ENCODE measurements at regions of chr16 and their contacts with region 1.

Region 1: GRCh38 chr16:527006-527753 is at the start of gene CAPN15:
- DNase-seq: peak; percentile 91
- ATAC-seq: peak; percentile 71
- H3K4me3 Mint-ChIP-seq: peak within 1 kb of the TSS; percentile 94
- H3K27ac Mint-ChIP-seq: peak within 1 kb of the TSS; percentile 96
- H3K4me1 Mint-ChIP-seq: peaks cover 35% of the 10 kb centered on the region
- H3K27me3 Mint-ChIP-seq: no peaks in the 10 kb centered on the region
- total RNA-seq, gene CAPN15: 64.7 to 69.7 TPM

Region 2: DNA sequence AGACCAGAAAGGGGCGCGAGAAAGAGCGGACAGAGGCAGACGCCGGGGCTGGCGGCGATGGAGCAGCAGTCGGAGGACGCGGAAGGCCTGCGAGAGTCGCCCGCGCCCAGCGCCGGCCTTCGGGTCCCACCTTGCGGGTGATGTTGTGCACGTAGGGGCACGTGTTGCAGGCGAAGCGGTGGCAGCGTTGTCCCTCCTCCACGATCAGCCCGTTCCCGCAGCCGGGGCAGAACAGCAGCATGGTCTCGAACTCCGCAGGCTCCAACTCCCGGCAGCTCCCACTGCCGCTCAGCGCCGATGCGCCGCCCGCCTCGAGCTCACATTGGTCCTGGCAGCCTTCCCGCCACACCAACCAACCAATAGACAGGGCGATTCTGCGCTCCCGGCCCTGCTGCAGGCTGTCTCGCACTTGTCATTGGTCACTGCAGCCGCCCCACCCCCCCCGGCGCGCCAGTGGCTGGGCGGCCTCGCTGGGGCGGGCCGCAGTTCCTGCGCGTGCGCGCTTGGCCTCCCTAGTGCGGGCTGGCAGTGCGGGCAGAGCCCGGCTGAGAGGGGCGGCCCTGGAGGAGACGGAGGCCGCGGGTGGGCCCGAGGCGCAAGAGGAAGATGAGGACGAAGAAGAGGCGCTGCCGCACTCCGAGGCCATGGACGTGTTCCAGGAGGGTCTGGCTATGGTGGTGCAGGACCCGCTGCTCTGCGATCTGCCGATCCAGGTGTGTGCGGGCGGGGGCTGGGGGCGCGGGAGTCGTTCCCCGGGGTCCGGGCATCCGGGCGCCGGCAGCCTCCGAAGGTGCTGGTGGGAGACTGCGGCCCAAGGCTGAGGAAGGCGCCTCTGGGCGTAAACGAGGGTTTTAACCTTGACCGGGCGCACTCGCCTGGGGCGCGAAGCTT is 473.6 kb before region 1 on chr16 and contains the starts of genes POLR3K and SNRNP25:
- CTCF ChIA-PET with region 1: no interaction called
- POLR2A ChIA-PET with region 1: no interaction called
- intact Hi-C with region 1: loop called in 1 of 2 experiments (anchors 1 kb)
- DNase-seq: peak; percentile 100
- ATAC-seq: peak; percentile 98
- H3K4me3 Mint-ChIP-seq: peak within 1 kb of the TSS; percentile 94
- H3K27ac Mint-ChIP-seq: peak within 1 kb of the TSS; percentile 90
- H3K4me1 Mint-ChIP-seq: peaks cover 30% of the 10 kb centered on the region
- H3K27me3 Mint-ChIP-seq: no peaks in the 10 kb centered on the region
- total RNA-seq, gene POLR3K: 31.9 to 46.8 TPM
- total RNA-seq, gene SNRNP25: 42.5 to 50.0 TPM

Region 3: GRCh38 chr16:234468-235305 is 292.5 kb before region 1 on chr16 and contains the start of gene FAM234A:
- CTCF ChIA-PET with region 1: no interaction called
- POLR2A ChIA-PET with region 1: no interaction called
- intact Hi-C with region 1: loop called (anchors 1 to 5 kb)
- DNase-seq: peak; percentile 98
- ATAC-seq: peak; percentile 91
- H3K4me3 Mint-ChIP-seq: peak within 1 kb of the TSS; percentile 90
- H3K27ac Mint-ChIP-seq: peak within 1 kb of the TSS; percentile 96
- H3K4me1 Mint-ChIP-seq: peaks cover 17% of the 10 kb centered on the region
- H3K27me3 Mint-ChIP-seq: no peaks in the 10 kb centered on the region
- total RNA-seq, gene FAM234A: 11.3 to 15.2 TPM

Region 4: GRCh38 chr16:391885-392335 is 135.3 kb before region 1 on chr16:
- CTCF ChIA-PET with region 1: interaction called, 3 read pairs
- POLR2A ChIA-PET with region 1: no interaction called
- intact Hi-C with region 1: loop called (anchors 1 to 5 kb)
- DNase-seq: peak; percentile 91
- ATAC-seq: peak; percentile 93
- H3K4me3 Mint-ChIP-seq: no peak overlapping the region
- H3K27ac Mint-ChIP-seq: no peak overlapping the region
- H3K4me1 Mint-ChIP-seq: peaks cover 22% of the 10 kb centered on the region
- H3K27me3 Mint-ChIP-seq: peaks cover 3% of the 10 kb centered on the region

Region 5: GRCh38 chr16:569445-570254 is 42.5 kb after region 1 on chr16 and contains the start of gene PIGQ:
- CTCF ChIA-PET with region 1: no interaction called
- POLR2A ChIA-PET with region 1: no interaction called
- intact Hi-C with region 1: loop called in 1 of 2 experiments (anchors 1 kb)
- DNase-seq: peak; percentile 79
- ATAC-seq: peak; percentile 70
- H3K4me3 Mint-ChIP-seq: peak within 1 kb of the TSS; percentile 79
- H3K27ac Mint-ChIP-seq: peak within 1 kb of the TSS; percentile 92
- H3K4me1 Mint-ChIP-seq: peaks cover 26% of the 10 kb centered on the region
- H3K27me3 Mint-ChIP-seq: no peaks in the 10 kb centered on the region
- total RNA-seq, gene PIGQ: 24.2 to 24.7 TPM

Region 6: DNA sequence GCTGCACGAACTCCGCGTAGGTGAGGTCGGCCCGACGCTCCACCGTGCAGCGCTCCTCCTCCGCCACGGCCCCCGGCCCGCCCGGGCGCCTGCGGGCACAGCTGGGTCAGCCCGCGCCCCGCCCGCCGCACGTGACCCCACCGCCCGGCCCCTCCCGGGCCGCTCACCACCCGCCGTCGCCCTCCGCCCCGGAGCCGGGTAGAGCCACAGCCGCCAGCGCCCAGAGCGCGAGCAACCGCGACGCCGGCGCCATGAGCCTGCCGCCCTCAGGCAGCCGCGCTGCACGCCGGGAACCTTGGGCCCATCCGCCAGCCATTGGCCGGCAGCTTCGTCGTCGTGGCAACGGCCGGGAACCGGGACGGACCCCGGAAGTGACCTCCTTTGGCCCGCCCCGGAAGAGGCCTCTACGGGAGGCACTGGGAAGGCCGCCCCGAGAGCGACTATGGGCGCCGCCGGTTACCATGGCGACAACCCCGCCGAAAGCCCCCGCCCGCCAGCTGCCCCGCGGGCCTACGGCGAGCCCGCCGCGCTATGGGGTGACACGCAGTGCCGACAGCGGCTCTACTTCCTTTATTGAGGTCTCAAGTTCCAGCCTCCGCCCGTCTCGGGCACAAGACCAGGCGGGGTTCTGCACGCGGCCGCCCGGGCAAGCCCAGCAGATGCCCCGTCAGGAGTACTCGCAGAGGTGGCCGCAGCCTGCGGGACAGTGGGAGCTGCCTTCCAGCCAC is 157.1 kb after region 1 on chr16 and contains the start of gene JMJD8:
- CTCF ChIA-PET with region 1: no interaction called
- POLR2A ChIA-PET with region 1: no interaction called
- intact Hi-C with region 1: loop called in 1 of 2 experiments (anchors 5 kb)
- DNase-seq: peak; percentile 99
- ATAC-seq: peak; percentile 80
- H3K4me3 Mint-ChIP-seq: peak within 1 kb of the TSS; percentile 76
- H3K27ac Mint-ChIP-seq: peak within 1 kb of the TSS; percentile 58
- H3K4me1 Mint-ChIP-seq: peaks cover 40% of the 10 kb centered on the region
- H3K27me3 Mint-ChIP-seq: no peaks in the 10 kb centered on the region
- total RNA-seq, gene JMJD8: 26.1 to 31.4 TPM

Region 7: GRCh38 chr16:714558-715476 is 187.6 kb after region 1 on chr16 and contains the start of gene METRN:
- CTCF ChIA-PET with region 1: no interaction called
- POLR2A ChIA-PET with region 1: no interaction called
- intact Hi-C with region 1: no loop called
- DNase-seq: peak; percentile 95
- ATAC-seq: peak; percentile 85
- H3K4me3 Mint-ChIP-seq: peak within 1 kb of the TSS; percentile 56
- H3K27ac Mint-ChIP-seq: no peak within 1 kb of the TSS
- H3K4me1 Mint-ChIP-seq: peaks cover 8% of the 10 kb centered on the region
- H3K27me3 Mint-ChIP-seq: peaks cover 14% of the 10 kb centered on the region
- total RNA-seq, gene METRN: 11.1 to 13.3 TPM

Region 8: DNA sequence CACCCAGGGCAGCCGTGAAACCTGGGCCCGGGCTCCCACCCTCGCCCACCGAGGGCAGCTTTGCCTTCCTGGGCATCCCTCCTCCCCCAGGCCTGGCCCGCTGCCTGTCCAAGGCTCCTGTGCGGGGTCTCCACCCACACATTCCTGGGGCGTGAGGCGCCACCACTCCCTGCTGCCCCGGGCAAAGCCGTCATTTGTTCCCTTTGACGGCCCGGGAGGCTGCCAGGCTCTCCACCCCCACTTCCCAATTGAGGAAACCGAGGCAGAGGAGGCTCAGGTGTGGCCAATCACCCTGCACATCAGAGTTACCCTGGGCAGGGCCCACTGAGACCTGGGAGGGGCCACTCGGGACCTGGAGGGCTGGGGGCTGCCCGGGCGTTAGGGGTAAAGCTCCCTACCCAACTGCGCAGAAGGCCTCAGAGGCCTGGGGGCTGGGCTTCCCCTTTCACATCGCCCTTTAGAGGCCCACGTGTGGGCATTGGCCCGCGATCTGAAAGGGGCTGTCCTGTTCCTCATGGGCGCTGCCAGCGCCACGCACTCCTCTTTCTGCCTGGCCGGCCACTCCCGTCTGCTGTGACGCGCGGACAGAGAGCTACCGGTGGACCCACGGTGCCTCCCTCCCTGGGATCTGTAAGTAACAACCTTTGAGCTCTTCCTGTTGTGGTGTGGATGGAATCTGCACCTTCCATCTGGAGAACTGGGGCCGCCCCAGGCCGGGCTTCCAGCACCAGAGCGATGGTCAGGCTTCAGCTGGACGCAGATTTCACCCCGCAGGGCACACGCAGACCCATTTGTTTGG is 233.6 kb after region 1 on chr16 and contains the start of gene MSLN:
- CTCF ChIA-PET with region 1: no interaction called
- POLR2A ChIA-PET with region 1: no interaction called
- intact Hi-C with region 1: no loop called
- DNase-seq: no peak
- ATAC-seq: no peak
- H3K4me3 Mint-ChIP-seq: no peak within 1 kb of the TSS
- H3K27ac Mint-ChIP-seq: no peak within 1 kb of the TSS
- H3K4me1 Mint-ChIP-seq: no peaks in the 10 kb centered on the region
- H3K27me3 Mint-ChIP-seq: peaks cover 7% of the 10 kb centered on the region
- total RNA-seq, gene MSLN: not detected

Region 9: DNA sequence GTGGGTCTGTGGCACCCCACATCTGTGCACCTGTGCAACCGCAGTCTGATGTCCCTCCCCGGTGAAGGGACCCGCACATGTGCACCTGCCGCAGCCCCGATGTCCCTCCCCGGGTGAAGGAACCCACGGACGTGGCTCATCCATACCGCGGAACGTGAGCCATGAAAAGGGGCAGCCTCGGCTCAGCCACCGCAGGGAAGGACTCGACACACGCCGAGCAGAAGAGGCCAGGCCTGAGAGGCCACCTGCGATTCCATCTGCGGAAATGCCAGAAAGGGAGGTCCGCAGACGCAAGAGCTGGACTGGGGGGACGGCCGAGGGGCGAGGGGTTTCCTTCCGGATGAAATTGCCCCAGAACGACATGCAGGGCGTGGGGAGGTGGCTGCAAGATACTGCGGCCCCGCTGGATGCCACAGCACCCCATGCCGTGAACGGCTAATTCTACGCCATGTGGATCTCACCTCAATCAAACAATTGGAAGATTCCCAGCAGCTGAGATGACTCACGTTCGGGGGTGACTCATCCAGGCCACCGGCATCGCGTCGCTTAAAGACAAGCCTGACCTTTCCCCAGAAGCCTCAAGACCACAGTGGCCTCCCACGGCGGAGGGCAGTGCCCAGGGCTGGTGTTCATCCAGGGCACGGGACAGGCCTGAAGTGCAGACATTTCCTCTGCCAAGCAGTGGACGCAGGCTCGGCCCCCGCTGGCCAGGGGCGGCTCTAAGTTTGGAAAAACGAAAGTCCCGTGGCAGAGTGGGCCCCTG is 475.4 kb after region 1 on chr16:
- CTCF ChIA-PET with region 1: no interaction called
- POLR2A ChIA-PET with region 1: no interaction called
- intact Hi-C with region 1: loop called in 1 of 2 experiments (anchors 5 kb)
- DNase-seq: peak; percentile 92
- ATAC-seq: peak; percentile 69
- H3K4me3 Mint-ChIP-seq: peak overlapping the region; percentile 26
- H3K27ac Mint-ChIP-seq: no peak overlapping the region
- H3K4me1 Mint-ChIP-seq: peaks cover 53% of the 10 kb centered on the region
- H3K27me3 Mint-ChIP-seq: no peaks in the 10 kb centered on the region

Measured in activated CD4-positive, alpha-beta T cell treated with anti-CD3 and anti-CD28 coated beads for 36 hours (primary cell).